ENCODE measurements at regions of chr5 and their contacts with region 1.

Region 1: GRCh38 chr5:93596676-93597461 is 13.8 kb downstream of the NR2F1 start:
- DNase-seq: no peak
- ATAC-seq: no peak
- H3K4me3 ChIP-seq: no peak overlapping the region
- H3K4me3 Mint-ChIP-seq: no peak overlapping the region
- H3K27ac ChIP-seq: no peak overlapping the region
- H3K27ac Mint-ChIP-seq: no peak overlapping the region
- H3K4me1 ChIP-seq: peaks cover 29% of the 10 kb centered on the region
- H3K4me1 Mint-ChIP-seq: peaks cover 14% of the 10 kb centered on the region
- H3K27me3 ChIP-seq: peaks cover 89 to 96% of the 10 kb centered on the region in 2 experiments
- H3K27me3 Mint-ChIP-seq: peaks cover 64% of the 10 kb centered on the region
- CTCF ChIP-seq: no peak

Region 2: DNA sequence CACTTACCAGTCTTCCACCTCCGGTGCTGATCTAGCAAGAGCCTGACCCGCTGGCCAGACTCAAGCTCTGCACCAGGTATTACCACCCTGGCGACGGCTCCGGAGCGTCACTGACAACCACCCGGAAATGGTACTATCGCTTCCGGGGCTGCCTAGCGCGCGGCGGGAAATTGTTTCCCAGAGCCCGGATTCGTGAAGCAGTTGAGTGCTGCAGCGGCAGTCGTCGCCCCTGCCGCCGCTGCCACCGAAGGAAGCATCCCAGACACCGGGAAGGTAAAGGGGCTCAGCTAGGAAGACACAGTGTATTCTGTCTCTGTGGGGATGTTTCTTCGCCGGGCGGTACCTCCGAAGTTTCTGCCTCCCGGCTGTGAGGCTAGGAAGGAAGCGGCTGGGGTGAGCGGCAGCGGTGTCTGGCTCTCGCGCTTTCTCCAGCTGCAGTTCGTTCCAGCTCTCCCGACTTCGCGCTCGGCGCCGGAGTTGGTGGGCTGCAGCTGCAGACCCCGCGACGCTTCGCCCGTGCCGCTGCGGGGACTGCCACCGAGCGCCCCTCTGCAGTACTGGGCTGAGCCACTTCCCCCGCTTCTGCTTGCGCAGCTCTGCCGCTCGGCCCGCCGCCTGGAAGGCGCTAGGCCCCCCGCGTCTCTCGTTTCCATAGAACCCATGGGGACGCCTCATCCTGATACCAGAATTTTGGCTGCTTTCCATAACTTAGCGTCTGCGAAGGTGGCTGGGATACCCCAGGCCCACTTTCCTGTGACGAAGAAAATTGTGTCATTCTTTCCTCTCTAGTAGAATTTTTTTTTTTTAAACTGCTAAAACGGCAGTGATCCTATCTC is 1021.8 kb after region 1 on chr5 and contains the starts of genes KIAA0825 and SLF1:
- CTCF ChIA-PET with region 1: no interaction called
- POLR2A ChIA-PET with region 1: no interaction called
- intact Hi-C with region 1: loop called in 1 of 2 experiments (anchors 10 kb)
- DNase-seq: peak; percentile 71 to 92 (median 80)
- ATAC-seq: peak; percentile 87
- H3K4me3 ChIP-seq: peak within 1 kb of the TSS; percentile 93
- H3K4me3 Mint-ChIP-seq: peak within 1 kb of the TSS; percentile 92
- H3K27ac ChIP-seq: peak within 1 kb of the TSS; percentile 37 to 67
- H3K27ac Mint-ChIP-seq: peak within 1 kb of the TSS; percentile 89
- H3K4me1 ChIP-seq: peaks cover 20% of the 10 kb centered on the region
- H3K4me1 Mint-ChIP-seq: peaks cover 51% of the 10 kb centered on the region
- H3K27me3 ChIP-seq: no peaks in the 10 kb centered on the region
- H3K27me3 Mint-ChIP-seq: no peaks in the 10 kb centered on the region
- CTCF ChIP-seq: no peak
- total RNA-seq, gene KIAA0825: 1.5 to 1.6 TPM
- total RNA-seq, gene SLF1: 7.7 to 7.9 TPM

Measured in CD4-positive, alpha-beta T cell (primary cell).